PC-9 (cell line): ENCODE measurements at regions of chr11 and their contacts with region 1.

Region 1: DNA sequence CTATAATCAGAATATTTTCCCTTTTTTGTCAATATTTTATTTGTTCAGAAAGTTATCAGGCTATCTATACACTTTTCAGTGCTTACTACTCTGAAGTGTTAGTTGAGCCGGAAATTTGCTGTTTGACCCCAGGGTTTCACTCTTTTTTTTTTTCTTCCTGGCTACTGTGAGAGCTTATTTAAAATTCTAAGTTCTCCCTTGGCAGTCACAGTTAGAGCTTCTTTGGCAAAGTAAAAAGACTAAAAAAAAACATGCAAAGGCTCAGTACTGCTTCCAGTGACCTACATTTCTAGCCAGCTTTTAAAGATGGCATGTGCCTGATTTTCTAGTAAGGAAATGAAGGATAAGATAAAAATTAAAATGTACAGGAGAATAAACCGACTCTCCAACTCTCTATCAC is 48.4 kb downstream of the ELP4 start:
- DNase-seq: no peak
- H3K4me3 ChIP-seq: no peak overlapping the region
- H3K27ac ChIP-seq: no peak overlapping the region
- H3K4me1 ChIP-seq: no peaks in the 10 kb centered on the region
- H3K27me3 ChIP-seq: no peaks in the 10 kb centered on the region
- CTCF ChIP-seq: no peak

Region 2: GRCh38 chr11:30322826-30323710 is 1234.9 kb before region 1 on chr11 and contains the start of gene ARL14EP:
- CTCF ChIA-PET with region 1: no interaction called
- POLR2A ChIA-PET with region 1: interaction called, 12 read pairs
- intact Hi-C with region 1: no loop called
- DNase-seq: peak; percentile 94 to 96
- H3K4me3 ChIP-seq: peak within 1 kb of the TSS; percentile 88
- H3K27ac ChIP-seq: peak within 1 kb of the TSS; percentile 62
- H3K4me1 ChIP-seq: peaks cover 18% of the 10 kb centered on the region
- H3K27me3 ChIP-seq: no peaks in the 10 kb centered on the region
- CTCF ChIP-seq: no peak
- total RNA-seq, gene ARL14EP: 14.8 and 16.2 TPM in 2 replicates

Region 3: GRCh38 chr11:31404614-31405013 is 153.4 kb before region 1 on chr11:
- CTCF ChIA-PET with region 1: no interaction called
- POLR2A ChIA-PET with region 1: no interaction called
- intact Hi-C with region 1: no loop called
- DNase-seq: no peak
- H3K4me3 ChIP-seq: no peak overlapping the region
- H3K27ac ChIP-seq: no peak overlapping the region
- H3K4me1 ChIP-seq: peaks cover 9% of the 10 kb centered on the region
- H3K27me3 ChIP-seq: no peaks in the 10 kb centered on the region
- CTCF ChIP-seq: no peak

Region 4: DNA sequence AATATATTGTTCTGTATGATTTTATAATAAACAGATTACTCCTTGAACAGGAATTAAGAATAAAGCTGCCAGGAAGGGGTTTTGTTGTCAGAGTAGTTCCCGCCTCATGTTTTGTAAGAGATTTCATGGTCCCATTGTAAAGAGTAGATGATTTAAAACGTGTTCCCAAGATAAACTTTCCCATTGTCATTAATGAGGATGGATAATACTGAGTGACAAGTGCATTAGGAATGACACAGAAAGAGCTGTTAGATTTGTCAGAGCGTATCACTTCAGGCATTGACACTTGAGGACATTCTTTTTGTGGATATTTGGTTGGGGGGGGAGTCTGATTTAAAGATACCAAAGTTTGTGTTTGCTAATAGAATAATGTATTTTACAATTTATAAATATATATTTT is 106.1 kb after region 1 on chr11:
- CTCF ChIA-PET with region 1: no interaction called
- POLR2A ChIA-PET with region 1: no interaction called
- intact Hi-C with region 1: no loop called
- DNase-seq: no peak
- H3K4me3 ChIP-seq: no peak overlapping the region
- H3K27ac ChIP-seq: no peak overlapping the region
- H3K4me1 ChIP-seq: no peaks in the 10 kb centered on the region
- H3K27me3 ChIP-seq: no peaks in the 10 kb centered on the region
- CTCF ChIP-seq: no peak